Panc1 (cell line): ENCODE measurements at regions of chr19 and their contacts with region 1.

Region 1: DNA sequence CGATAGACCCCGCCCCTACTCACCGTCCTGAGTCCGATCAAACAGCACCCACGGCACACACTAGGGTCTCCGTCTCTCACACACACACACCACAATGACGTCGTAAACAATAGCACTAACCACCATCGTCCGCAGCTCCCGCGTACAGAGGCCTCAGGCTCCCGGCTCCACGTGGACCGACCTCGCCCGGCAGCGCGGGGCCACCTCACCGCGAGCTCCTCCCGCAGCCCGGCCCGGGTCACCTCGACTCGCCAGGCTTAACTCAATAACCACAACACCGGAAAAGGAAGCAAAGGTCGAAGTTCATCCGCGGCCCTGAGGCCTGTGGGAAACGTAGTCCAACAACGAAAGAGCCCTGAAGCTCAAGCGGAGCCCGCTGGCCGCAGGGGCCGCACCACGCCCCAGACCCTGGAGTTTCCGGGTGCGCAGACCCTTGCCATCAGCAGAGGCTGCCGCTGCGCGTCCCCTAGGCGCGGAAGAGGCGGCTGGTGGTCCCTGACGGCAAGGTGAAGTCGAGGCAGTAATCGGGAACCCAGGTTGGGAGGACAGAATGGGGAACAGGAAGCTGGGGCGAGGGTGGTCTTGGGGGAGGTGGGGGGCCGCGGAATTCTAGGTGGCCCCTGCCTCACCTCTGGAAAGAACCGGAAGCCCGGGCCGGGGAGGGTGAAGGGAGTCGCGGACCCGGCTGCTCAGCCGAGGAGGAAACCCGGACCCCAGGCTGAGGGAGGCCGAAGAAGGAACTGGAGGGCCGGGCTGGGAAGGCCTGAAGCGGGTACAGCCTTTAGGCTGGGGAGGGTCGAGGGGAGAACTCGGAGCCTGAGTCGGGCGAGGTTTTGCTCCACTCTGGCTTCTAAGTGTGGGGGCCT is at the start of gene ZNF529:
- DNase-seq: peak; percentile 87
- ATAC-seq: peak; percentile 98
- H3K4me3 ChIP-seq: peak within 1 kb of the TSS; percentile 57 to 99
- H3K27ac ChIP-seq: peak within 1 kb of the TSS; percentile 91
- H3K4me1 ChIP-seq: peaks cover 13% of the 10 kb centered on the region
- H3K27me3 ChIP-seq: no peaks in the 10 kb centered on the region
- CTCF ChIP-seq: no peak
- total RNA-seq, gene ZNF529: 15.6 TPM

Region 2: DNA sequence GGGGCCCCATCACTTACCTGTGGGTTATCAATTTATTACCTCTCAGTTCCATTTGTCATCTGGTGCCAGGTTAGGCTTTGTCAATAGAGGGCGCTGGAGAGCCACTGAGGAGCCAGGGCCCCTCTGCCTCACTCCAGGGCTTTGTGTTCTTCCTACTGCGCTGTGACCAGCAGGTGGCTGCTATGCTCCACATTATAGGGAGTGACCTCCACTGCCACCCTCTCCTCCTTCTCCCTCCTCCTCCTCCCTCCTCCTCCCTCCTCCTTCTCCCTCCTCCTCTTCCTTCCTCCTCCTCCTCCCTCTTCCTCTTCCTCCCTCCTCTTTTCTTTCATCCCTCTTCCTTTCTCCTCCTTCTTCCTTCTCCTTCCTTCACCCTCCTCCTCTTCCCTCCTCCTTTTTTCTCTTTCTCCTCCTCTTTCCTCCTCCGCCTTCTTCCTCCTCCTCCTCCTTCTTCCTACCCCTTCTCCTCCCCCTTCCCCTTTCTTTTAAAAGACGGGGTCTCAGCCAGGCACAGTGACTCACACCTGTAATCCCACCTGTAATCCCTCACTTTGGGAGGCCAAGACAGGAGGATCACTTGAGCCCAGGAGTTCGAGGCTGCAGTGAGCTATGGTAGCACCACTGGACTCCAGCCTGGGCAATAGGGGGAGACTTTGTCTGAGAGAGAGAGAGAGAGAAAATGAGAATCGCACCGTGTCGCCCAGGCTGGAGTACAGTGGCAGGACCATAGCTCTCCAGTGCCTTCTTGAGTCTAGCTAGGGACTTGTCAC is 879.2 kb before region 1 on chr19:
- CTCF ChIA-PET with region 1: no interaction called
- POLR2A ChIA-PET with region 1: interaction called, 10 read pairs
- in situ Hi-C with region 1: no loop called
- intact Hi-C with region 1: no loop called
- DNase-seq: peak; percentile 85
- ATAC-seq: peak; percentile 100
- H3K4me3 ChIP-seq: no peak overlapping the region
- H3K27ac ChIP-seq: no peak overlapping the region
- H3K4me1 ChIP-seq: no peaks in the 10 kb centered on the region
- H3K27me3 ChIP-seq: no peaks in the 10 kb centered on the region
- CTCF ChIP-seq: peak; percentile 100

Region 3: DNA sequence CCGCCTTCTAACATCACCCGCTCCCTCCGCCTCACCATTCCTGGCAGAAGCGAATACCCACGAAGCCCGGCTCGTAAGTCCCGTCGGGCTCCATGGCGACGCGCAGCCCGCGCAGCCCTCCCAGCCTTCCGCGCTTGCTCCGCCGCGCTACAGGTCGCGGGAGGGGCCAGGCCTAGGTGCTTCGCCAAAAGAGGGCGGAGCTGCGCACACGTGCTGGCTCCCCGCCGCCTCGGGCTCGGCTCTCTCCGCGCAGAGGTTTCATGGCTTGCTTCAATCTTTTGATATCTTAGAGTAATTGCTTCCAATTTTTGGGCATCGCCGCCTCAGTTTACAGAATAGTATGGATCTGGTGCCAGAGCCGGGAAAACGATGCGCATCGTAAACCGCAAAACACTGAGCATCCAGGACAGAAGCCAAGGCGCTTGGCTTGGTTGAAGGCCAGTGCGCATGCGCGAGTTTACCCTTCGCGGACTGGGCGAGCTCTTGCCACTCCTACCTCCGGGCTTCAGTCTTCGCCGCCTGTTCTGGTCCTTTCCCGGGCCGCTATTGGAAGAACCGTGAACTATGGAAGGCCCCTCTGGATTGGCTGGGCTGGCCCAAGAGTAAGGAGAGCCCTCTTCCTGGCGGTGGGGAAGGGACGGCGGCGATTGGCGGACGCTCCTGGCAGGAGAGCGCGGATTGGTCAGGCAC is 458.3 kb before region 1 on chr19 and contains the start of gene POLR2I:
- CTCF ChIA-PET with region 1: interaction called, 13 read pairs
- POLR2A ChIA-PET with region 1: no interaction called
- in situ Hi-C with region 1: no loop called
- intact Hi-C with region 1: no loop called
- DNase-seq: peak; percentile 99
- ATAC-seq: peak; percentile 95
- H3K4me3 ChIP-seq: peak within 1 kb of the TSS; percentile 85 to 96
- H3K27ac ChIP-seq: peak within 1 kb of the TSS; percentile 92
- H3K4me1 ChIP-seq: peaks cover 14% of the 10 kb centered on the region
- H3K27me3 ChIP-seq: no peaks in the 10 kb centered on the region
- CTCF ChIP-seq: no peak
- total RNA-seq, gene POLR2I: 174 TPM

Region 4: GRCh38 chr19:36750066-36750691 is 176.9 kb after region 1 on chr19:
- CTCF ChIA-PET with region 1: no interaction called
- POLR2A ChIA-PET with region 1: no interaction called
- in situ Hi-C with region 1: no loop called
- intact Hi-C with region 1: no loop called
- DNase-seq: no peak
- ATAC-seq: no peak
- H3K4me3 ChIP-seq: no peak overlapping the region
- H3K27ac ChIP-seq: no peak overlapping the region
- H3K4me1 ChIP-seq: no peaks in the 10 kb centered on the region
- H3K27me3 ChIP-seq: no peaks in the 10 kb centered on the region
- CTCF ChIP-seq: no peak

Region 5: DNA sequence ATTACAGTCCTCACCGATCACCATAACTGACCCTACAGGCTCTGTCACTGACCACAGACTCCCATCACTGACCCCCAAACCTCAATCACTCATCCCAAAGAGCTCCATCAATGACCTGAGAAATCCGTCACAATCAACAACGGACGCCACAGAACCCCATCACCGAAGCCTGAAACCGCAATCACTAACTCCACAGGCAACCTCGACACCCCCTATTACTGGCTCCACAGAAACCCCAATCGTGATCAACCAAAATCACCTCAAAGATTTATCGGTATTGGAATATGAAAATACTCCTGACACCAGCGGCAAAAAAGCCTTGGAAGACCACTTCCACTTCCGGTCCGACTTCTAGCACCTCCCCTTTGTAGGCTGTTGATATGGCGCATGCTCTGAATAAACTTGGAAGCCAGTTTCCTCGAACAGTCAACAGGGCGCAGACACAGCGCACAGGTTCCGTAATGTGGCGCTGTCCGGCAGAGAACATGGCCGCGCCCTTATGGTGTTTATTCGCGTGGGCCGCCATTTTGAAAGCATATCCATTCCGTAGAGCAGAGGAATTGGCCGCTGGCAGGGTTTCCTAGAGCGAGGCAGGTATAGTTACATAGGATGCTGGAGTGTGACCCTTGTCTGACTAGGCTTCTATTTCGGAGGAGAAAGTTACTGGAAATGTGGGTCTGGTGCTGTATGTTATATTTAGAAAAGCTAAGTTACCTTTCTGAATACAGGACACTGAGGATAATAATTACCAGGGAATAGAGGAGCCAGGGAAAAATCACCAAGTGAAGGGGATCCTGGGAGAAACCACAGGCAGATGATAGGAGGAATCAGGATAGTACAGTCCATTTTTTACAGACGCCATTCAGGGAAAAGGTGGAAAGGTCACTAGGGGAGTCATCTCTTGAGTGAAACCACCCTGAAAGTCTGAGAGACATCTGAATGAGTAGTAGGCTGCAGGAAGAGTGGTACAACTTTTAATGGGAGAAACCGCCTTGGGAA is 599.4 kb after region 1 on chr19 and contains the start of gene ZNF585A:
- CTCF ChIA-PET with region 1: no interaction called
- POLR2A ChIA-PET with region 1: interaction called, 10 read pairs
- in situ Hi-C with region 1: no loop called
- intact Hi-C with region 1: no loop called
- DNase-seq: peak; percentile 94
- ATAC-seq: peak; percentile 100
- H3K4me3 ChIP-seq: peak within 1 kb of the TSS; percentile 84 to 87
- H3K27ac ChIP-seq: peak within 1 kb of the TSS; percentile 97
- H3K4me1 ChIP-seq: no peaks in the 10 kb centered on the region
- H3K27me3 ChIP-seq: no peaks in the 10 kb centered on the region
- CTCF ChIP-seq: no peak
- total RNA-seq, gene ZNF585A: 23.4 TPM

Region 6: GRCh38 chr19:37243206-37243632 is 670.0 kb after region 1 on chr19:
- CTCF ChIA-PET with region 1: no interaction called
- POLR2A ChIA-PET with region 1: interaction called, 10 read pairs
- in situ Hi-C with region 1: no loop called
- intact Hi-C with region 1: no loop called
- DNase-seq: no peak
- ATAC-seq: no peak
- H3K4me3 ChIP-seq: no peak overlapping the region
- H3K27ac ChIP-seq: no peak overlapping the region
- H3K4me1 ChIP-seq: no peaks in the 10 kb centered on the region
- H3K27me3 ChIP-seq: no peaks in the 10 kb centered on the region
- CTCF ChIP-seq: no peak